ENCODE measurements at regions of chr9 and their contacts with region 1.

Region 1: DNA sequence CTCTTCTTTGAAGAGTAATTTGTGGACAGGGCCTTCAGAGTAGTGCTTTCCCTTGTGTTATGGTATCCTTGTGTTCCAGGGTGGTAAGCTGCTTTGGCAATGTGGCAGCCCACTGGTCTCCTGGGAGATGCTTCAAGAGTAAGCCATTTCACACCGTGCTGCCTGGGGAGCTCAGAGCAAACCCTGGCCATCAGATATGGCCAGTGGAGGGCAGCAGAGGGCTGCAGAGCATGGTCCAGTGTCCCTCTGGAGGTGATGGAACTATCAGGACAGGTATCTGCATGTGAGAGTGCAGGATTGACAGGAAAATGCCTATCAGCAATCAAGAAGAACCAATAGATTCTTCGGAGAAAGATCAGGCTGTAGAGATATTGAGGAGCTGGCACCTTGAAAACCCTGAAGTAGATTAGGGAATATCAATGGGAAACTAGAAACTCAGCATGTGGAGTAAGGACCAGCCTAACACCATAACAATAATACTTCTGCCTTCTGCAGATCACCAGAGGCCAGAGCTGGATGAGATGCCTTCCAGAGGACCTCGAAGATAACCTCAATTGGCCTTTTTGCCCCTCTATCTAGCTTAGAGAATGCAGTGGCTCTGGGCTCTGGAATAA is 90.8 kb downstream of the PLPPR1 start:
- DNase-seq: peak; percentile 41
- H3K4me3 ChIP-seq: no peak overlapping the region
- H3K27ac ChIP-seq: no peak overlapping the region
- H3K4me1 ChIP-seq: no peaks in the 10 kb centered on the region
- H3K27me3 ChIP-seq: no peaks in the 10 kb centered on the region
- CTCF ChIP-seq: peak; percentile 89 to 93

Region 2: GRCh38 chr9:100714372-100715099 is 404.8 kb before region 1 on chr9:
- CTCF ChIA-PET with region 1: no interaction called
- dilution Hi-C with region 1: no loop called
- in situ Hi-C with region 1: loop called in 1 of 2 experiments (anchors 25 kb)
- intact Hi-C with region 1: loop called (anchors 1 kb)
- DNase-seq: peak; percentile 37
- H3K4me3 ChIP-seq: no peak overlapping the region
- H3K27ac ChIP-seq: no peak overlapping the region
- H3K4me1 ChIP-seq: no peaks in the 10 kb centered on the region
- H3K27me3 ChIP-seq: no peaks in the 10 kb centered on the region
- CTCF ChIP-seq: peak; percentile 87 to 95

Region 3: DNA sequence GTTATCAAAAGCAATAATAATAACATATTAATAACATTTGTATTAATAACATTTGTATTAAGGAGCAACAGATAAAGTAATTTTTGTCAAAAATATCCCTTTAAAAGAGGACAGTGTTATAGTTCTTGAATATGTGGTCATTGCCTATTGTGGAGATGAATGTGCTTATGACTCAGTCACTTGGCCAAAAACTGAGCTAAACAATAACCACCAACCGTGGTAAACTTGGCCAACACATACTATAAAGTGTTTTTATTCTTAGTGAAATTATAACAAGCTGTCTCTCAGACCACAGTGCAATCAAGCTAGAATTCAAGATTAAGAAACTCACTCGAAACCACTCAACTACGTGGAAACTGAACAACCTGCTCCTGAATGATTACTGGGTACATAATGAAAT is 250.0 kb before region 1 on chr9:
- CTCF ChIA-PET with region 1: no interaction called
- dilution Hi-C with region 1: no loop called
- in situ Hi-C with region 1: no loop called
- intact Hi-C with region 1: no loop called
- DNase-seq: no peak
- H3K4me3 ChIP-seq: no peak overlapping the region
- H3K27ac ChIP-seq: no peak overlapping the region
- H3K4me1 ChIP-seq: no peaks in the 10 kb centered on the region
- H3K27me3 ChIP-seq: no peaks in the 10 kb centered on the region
- CTCF ChIP-seq: no peak

Region 4: GRCh38 chr9:101073122-101073521 is 46.2 kb before region 1 on chr9:
- CTCF ChIA-PET with region 1: no interaction called
- dilution Hi-C with region 1: no loop called
- in situ Hi-C with region 1: no loop called
- intact Hi-C with region 1: no loop called
- DNase-seq: no peak
- H3K4me3 ChIP-seq: no peak overlapping the region
- H3K27ac ChIP-seq: no peak overlapping the region
- H3K4me1 ChIP-seq: no peaks in the 10 kb centered on the region
- H3K27me3 ChIP-seq: no peaks in the 10 kb centered on the region
- CTCF ChIP-seq: no peak

Region 5: DNA sequence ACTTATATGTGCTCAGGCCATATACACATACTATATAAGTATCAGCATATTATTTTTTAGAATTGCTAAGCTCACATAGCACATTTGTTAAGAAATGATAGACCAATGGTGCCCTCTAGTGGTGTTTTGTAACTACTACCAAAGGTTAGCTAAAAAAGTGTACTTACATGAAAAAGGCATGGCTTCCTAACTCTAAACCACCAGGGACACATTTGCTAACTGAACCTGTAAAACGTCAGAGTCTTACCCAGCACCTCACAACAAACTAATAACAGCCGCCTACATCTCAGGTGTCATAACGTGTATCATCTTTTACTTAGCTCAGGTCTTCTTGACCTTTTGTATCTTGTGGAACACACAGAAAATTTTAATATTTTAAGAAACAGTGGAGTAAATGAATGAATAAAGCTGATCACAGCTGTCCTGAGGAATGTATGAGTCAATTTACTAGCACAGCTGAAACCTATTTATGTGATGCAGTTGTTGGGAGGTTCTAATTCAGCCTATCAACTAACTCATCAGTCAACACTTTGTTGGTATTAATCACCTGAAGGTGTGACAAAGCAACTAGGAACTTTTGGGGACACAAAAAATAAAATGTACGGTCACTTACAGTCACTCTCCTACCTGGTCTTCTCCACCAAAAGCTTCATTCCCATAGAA is 192.6 kb after region 1 on chr9:
- CTCF ChIA-PET with region 1: interaction called, 5 read pairs
- dilution Hi-C with region 1: no loop called
- in situ Hi-C with region 1: loop called in 1 of 2 experiments (anchors 25 kb)
- intact Hi-C with region 1: loop called (anchors 1 kb)
- DNase-seq: peak; percentile 58
- H3K4me3 ChIP-seq: no peak overlapping the region
- H3K27ac ChIP-seq: no peak overlapping the region
- H3K4me1 ChIP-seq: peaks cover 15% of the 10 kb centered on the region
- H3K27me3 ChIP-seq: no peaks in the 10 kb centered on the region
- CTCF ChIP-seq: peak; percentile 48 to 59

Region 6: GRCh38 chr9:101387871-101388506 is 268.7 kb after region 1 on chr9:
- CTCF ChIA-PET with region 1: no interaction called
- dilution Hi-C with region 1: no loop called
- in situ Hi-C with region 1: no loop called
- intact Hi-C with region 1: loop called (anchors 2 kb)
- DNase-seq: peak; percentile 32
- H3K4me3 ChIP-seq: no peak overlapping the region
- H3K27ac ChIP-seq: no peak overlapping the region
- H3K4me1 ChIP-seq: no peaks in the 10 kb centered on the region
- H3K27me3 ChIP-seq: no peaks in the 10 kb centered on the region
- CTCF ChIP-seq: peak; percentile 55 to 72

Region 7: DNA sequence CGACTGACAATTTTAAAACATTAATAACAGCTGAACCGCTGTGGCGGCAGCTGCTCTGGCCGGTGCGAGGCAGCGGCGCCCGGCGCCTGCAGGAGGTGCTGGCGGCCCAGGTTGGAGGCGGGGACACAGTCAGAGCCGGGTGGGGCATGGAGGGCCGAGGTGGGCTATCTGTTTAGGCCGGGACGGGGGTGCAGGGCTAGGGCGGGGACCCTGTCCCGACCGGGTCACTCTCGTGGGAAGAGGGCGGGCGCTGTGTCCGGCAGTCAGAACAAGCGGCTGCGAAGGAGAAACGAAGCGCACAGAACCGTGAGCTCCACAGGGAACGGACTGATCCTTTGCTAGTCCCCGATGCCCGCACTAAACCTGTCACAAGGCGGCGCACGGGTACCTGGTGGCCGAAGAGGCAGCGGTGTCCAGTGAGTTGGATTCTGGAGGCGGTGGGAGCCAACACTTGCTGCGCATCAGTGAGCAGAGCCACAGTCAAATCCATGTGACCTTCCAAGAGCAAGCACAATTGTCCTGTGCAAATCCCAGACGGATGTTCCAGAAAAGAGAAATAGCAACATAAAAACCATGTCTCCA is 329.9 kb after region 1 on chr9:
- CTCF ChIA-PET with region 1: no interaction called
- dilution Hi-C with region 1: no loop called
- in situ Hi-C with region 1: no loop called
- intact Hi-C with region 1: loop called (anchors 10 kb)
- DNase-seq: peak; percentile 64
- H3K4me3 ChIP-seq: peak overlapping the region; percentile 63 to 68 (median 65)
- H3K27ac ChIP-seq: no peak overlapping the region
- H3K4me1 ChIP-seq: no peaks in the 10 kb centered on the region
- H3K27me3 ChIP-seq: peaks cover 2% of the 10 kb centered on the region
- CTCF ChIP-seq: peak; percentile 44 to 57

Region 8: GRCh38 chr9:101530077-101530711 is 410.9 kb after region 1 on chr9:
- CTCF ChIA-PET with region 1: no interaction called
- dilution Hi-C with region 1: no loop called
- in situ Hi-C with region 1: no loop called
- intact Hi-C with region 1: loop called (anchors 5 kb)
- DNase-seq: peak; percentile 57
- H3K4me3 ChIP-seq: no peak overlapping the region
- H3K27ac ChIP-seq: no peak overlapping the region
- H3K4me1 ChIP-seq: peaks cover 7% of the 10 kb centered on the region
- H3K27me3 ChIP-seq: no peaks in the 10 kb centered on the region
- CTCF ChIP-seq: peak; percentile 73 to 82

Measured in mammary epithelial cell (primary cell).